ENCODE measurements at regions of chr1 and their contacts with region 1.

Region 1: GRCh38 chr1:169610108-169610507 is 19.8 kb downstream of the SELP start:
- DNase-seq: no peak
- ATAC-seq: no peak
- H3K4me3 Mint-ChIP-seq: no peak overlapping the region
- H3K27ac Mint-ChIP-seq: no peak overlapping the region
- H3K4me1 Mint-ChIP-seq: peaks cover 15% of the 10 kb centered on the region
- H3K27me3 Mint-ChIP-seq: no peaks in the 10 kb centered on the region
- CTCF ChIP-seq: no peak

Region 2: DNA sequence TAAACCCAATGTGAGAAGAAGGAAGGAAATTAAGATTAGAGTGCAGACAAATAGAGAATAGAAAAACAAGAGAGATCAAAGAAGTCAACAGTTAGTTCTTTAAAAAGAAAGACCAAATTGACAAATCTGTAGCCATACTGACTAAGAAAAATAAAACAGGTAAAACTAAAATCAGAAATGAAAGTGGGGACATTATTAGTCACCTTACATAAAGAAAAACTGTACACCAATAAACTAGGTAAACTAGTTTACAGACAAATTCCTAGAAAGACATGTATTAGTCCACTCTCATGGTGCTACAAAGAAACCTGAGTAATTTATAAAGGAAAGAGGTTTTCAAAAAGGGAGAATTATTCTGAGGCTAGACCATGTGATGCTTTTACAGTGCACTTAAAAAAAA is 219.8 kb before region 1 on chr1:
- CTCF ChIA-PET with region 1: no interaction called
- POLR2A ChIA-PET with region 1: no interaction called
- intact Hi-C with region 1: no loop called
- DNase-seq: no peak
- ATAC-seq: no peak
- H3K4me3 Mint-ChIP-seq: no peak overlapping the region
- H3K27ac Mint-ChIP-seq: no peak overlapping the region
- H3K4me1 Mint-ChIP-seq: no peaks in the 10 kb centered on the region
- H3K27me3 Mint-ChIP-seq: no peaks in the 10 kb centered on the region
- CTCF ChIP-seq: no peak

Region 3: DNA sequence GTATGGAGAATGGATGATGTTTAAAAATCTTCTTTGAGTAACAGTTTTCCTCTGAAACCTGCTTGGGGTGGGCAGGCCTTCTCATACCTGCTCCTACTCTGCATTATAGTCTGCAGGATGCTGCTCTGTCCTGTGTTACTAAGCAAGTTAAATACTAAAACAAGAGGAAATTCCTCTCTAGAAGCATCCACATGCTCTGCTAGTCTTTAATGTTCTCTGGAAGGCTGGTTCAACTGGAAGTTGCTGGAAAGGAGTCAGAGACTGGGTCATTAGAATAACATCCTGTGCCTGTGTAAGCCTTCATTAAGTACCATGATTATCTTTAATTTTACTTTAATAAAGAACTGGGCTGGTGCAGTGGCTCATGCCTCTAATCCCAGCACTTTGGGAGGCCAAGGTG is 14.0 kb after region 1 on chr1:
- CTCF ChIA-PET with region 1: no interaction called
- POLR2A ChIA-PET with region 1: no interaction called
- intact Hi-C with region 1: loop called (anchors 2 kb)
- DNase-seq: no peak
- ATAC-seq: no peak
- H3K4me3 Mint-ChIP-seq: no peak overlapping the region
- H3K27ac Mint-ChIP-seq: no peak overlapping the region
- H3K4me1 Mint-ChIP-seq: no peaks in the 10 kb centered on the region
- H3K27me3 Mint-ChIP-seq: no peaks in the 10 kb centered on the region
- CTCF ChIP-seq: no peak

Region 4: DNA sequence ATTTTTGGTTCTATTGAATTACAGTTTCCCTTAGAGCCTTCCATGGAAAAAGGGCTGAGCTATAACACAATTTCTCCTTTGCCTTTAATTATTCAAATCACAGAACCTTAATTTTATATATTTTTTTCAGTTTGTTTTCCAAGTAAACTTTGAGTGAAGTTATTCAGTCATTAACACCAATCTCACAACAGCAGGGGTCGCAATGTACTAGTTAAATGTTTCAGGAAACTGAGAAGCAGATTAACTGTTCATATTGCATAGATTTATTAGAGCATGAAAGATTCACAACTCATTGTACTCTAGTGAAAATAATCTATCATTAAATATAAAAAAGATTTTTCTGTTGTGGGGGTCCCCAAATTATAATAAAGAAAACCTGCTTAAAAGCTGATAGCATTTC is 400.3 kb after region 1 on chr1:
- CTCF ChIA-PET with region 1: no interaction called
- POLR2A ChIA-PET with region 1: no interaction called
- intact Hi-C with region 1: no loop called
- DNase-seq: no peak
- ATAC-seq: no peak
- H3K4me3 Mint-ChIP-seq: no peak overlapping the region
- H3K27ac Mint-ChIP-seq: no peak overlapping the region
- H3K4me1 Mint-ChIP-seq: no peaks in the 10 kb centered on the region
- H3K27me3 Mint-ChIP-seq: no peaks in the 10 kb centered on the region
- CTCF ChIP-seq: no peak